ENCODE measurements at regions of chr9 and their contacts with region 1.

Region 1: GRCh38 chr9:109990541-109990940 is 210.5 kb downstream of the PALM2AKAP2 start:
- DNase-seq: no peak
- H3K4me3 Mint-ChIP-seq: no peak overlapping the region
- H3K27ac Mint-ChIP-seq: no peak overlapping the region
- H3K4me1 Mint-ChIP-seq: peaks cover 12% of the 10 kb centered on the region
- H3K27me3 Mint-ChIP-seq: peaks cover 2% of the 10 kb centered on the region

Region 2: DNA sequence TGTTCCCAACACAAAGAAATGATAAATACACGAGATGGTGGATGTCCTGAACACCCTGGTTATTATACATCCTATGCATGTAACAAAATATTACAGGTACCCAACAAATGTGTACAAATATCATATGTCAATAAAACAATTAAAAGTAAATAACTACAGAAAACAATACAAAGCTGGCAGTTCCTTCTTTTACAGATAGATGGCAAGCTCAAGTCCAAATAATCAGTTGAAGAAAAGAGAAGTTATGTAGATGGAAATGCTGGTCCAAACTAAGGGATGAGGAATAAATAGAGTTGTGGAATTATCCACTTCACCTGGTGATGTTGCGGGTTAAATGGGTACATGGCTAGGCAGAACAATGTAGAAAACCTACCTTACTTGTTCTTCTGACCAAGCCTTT is 131.1 kb before region 1 on chr9:
- intact Hi-C with region 1: no loop called
- DNase-seq: no peak
- H3K4me3 Mint-ChIP-seq: no peak overlapping the region
- H3K27ac Mint-ChIP-seq: no peak overlapping the region
- H3K4me1 Mint-ChIP-seq: peaks cover 6% of the 10 kb centered on the region
- H3K27me3 Mint-ChIP-seq: peaks cover 22% of the 10 kb centered on the region

Region 3: DNA sequence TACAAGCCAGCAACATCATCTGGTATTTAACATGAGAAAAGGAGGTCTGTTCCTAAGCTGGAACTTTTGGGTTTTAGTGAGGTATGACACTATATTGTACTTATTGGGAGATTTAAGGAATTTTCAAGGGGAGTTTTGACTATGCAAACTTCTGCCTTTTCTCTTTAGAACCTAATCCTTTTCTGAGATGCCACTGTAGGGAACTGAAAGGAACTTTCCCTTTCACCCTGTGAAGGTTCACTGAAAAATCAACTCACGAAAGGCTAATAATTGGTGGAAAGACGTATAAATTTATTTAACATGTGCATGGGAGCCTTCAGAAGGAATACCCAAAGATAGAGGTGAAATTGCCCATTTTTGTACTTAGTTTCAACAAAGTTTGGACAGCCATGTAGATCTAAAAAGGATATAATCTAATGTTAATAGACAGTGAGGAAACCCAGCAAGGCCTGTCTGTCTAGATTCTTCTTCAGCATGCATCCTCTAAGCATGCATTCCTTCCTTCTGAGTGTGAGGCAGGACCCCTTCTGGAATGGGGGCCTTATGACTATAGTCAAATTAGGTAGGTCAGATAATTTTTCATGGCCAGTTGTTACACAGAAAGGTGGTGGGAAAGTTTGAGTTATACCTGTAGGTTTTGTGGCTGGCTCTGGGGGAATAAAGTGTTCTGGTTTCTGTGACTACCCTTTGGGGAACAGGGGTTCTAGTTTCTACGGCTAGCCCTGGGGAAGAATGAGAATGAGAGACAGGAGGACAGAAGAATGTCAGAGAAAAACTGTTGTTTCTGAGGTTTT is 17.1 kb after region 1 on chr9:
- intact Hi-C with region 1: no loop called
- DNase-seq: no peak
- H3K4me3 Mint-ChIP-seq: no peak overlapping the region
- H3K27ac Mint-ChIP-seq: no peak overlapping the region
- H3K4me1 Mint-ChIP-seq: peaks cover 38% of the 10 kb centered on the region
- H3K27me3 Mint-ChIP-seq: peaks cover 3% of the 10 kb centered on the region

Region 4: GRCh38 chr9:110040788-110041187 is 50.2 kb after region 1 on chr9:
- intact Hi-C with region 1: loop called (anchors 5 kb)
- DNase-seq: no peak
- H3K4me3 Mint-ChIP-seq: no peak overlapping the region
- H3K27ac Mint-ChIP-seq: no peak overlapping the region
- H3K4me1 Mint-ChIP-seq: peaks cover 13% of the 10 kb centered on the region
- H3K27me3 Mint-ChIP-seq: no peaks in the 10 kb centered on the region